ENCODE measurements at regions of chr11 and their contacts with region 1.

Region 1: GRCh38 chr11:59615637-59616395 is at the start of gene OSBP:
- DNase-seq: peak; percentile 86
- ATAC-seq: peak; percentile 80
- H3K4me3 Mint-ChIP-seq: peak within 1 kb of the TSS; percentile 96
- H3K27ac Mint-ChIP-seq: peak within 1 kb of the TSS; percentile 89
- H3K4me1 Mint-ChIP-seq: peaks cover 46% of the 10 kb centered on the region
- H3K27me3 Mint-ChIP-seq: no peaks in the 10 kb centered on the region
- CTCF ChIP-seq: no peak
- total RNA-seq, gene OSBP: 34.7 and 38.0 TPM in 2 replicates

Region 2: GRCh38 chr11:58549644-58550043 is 1066.2 kb before region 1 on chr11:
- CTCF ChIA-PET with region 1: no interaction called
- POLR2A ChIA-PET with region 1: no interaction called
- intact Hi-C with region 1: no loop called
- DNase-seq: no peak
- ATAC-seq: no peak
- H3K4me3 Mint-ChIP-seq: no peak overlapping the region
- H3K27ac Mint-ChIP-seq: no peak overlapping the region
- H3K4me1 Mint-ChIP-seq: no peaks in the 10 kb centered on the region
- H3K27me3 Mint-ChIP-seq: no peaks in the 10 kb centered on the region
- CTCF ChIP-seq: no peak

Region 3: GRCh38 chr11:59142530-59143507 is 473.0 kb before region 1 on chr11 and contains the start of gene FAM111A:
- CTCF ChIA-PET with region 1: no interaction called
- POLR2A ChIA-PET with region 1: interaction called, 5 read pairs
- intact Hi-C with region 1: loop called (anchors 2 kb)
- DNase-seq: peak; percentile 73
- ATAC-seq: peak; percentile 76
- H3K4me3 Mint-ChIP-seq: peak within 1 kb of the TSS; percentile 99
- H3K27ac Mint-ChIP-seq: peak within 1 kb of the TSS; percentile 99
- H3K4me1 Mint-ChIP-seq: peaks cover 71% of the 10 kb centered on the region
- H3K27me3 Mint-ChIP-seq: no peaks in the 10 kb centered on the region
- CTCF ChIP-seq: no peak
- total RNA-seq, gene FAM111A: 51.5 and 64.3 TPM in 2 replicates

Region 4: GRCh38 chr11:59542142-59542810 is 73.5 kb before region 1 on chr11:
- CTCF ChIA-PET with region 1: interaction called, 6 read pairs
- POLR2A ChIA-PET with region 1: no interaction called
- intact Hi-C with region 1: loop called (anchors 1 kb)
- DNase-seq: no peak
- ATAC-seq: no peak
- H3K4me3 Mint-ChIP-seq: no peak overlapping the region
- H3K27ac Mint-ChIP-seq: no peak overlapping the region
- H3K4me1 Mint-ChIP-seq: peaks cover 3% of the 10 kb centered on the region
- H3K27me3 Mint-ChIP-seq: no peaks in the 10 kb centered on the region
- CTCF ChIP-seq: no peak

Region 5: DNA sequence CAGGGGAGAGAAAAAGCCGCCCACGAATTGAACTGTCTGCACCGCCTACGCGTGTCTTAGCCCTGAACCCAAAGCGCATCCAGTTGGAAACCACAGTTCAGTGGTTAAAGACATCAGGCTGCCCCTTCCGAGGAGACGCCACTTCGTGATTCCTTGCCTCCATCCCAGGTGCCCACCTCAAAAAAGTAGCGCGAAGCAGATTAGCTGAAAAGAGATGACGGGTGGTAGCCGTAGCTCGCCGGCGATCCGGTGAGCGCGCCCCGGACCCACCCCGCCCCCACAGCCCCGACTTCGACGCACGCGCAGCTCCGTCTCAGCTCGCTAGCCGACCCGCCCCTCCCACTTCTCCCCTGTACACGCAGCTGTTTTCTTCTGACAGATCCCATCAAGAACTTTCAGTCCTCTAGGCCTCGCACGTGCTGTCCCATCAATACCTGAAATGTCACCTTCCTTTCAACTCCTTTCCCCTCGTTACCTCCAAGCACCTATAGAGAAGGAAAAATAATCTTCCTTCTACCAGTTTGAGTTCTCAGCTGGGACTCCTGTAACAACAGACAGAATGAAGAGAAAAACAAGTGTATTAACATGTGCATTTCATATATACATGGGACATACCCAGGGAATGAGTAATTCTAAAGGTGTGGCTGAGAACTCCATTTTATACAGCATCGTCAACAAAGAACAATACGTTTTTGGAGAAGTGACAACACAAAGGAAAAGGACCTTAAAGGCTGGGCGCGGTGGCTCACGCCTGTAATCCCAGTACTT is 54.9 kb before region 1 on chr11:
- CTCF ChIA-PET with region 1: no interaction called
- POLR2A ChIA-PET with region 1: interaction called, 21 read pairs
- intact Hi-C with region 1: loop called (anchors 1 kb)
- DNase-seq: peak; percentile 62
- ATAC-seq: peak; percentile 78
- H3K4me3 Mint-ChIP-seq: peak overlapping the region; percentile 92
- H3K27ac Mint-ChIP-seq: peak overlapping the region; percentile 91
- H3K4me1 Mint-ChIP-seq: peaks cover 43% of the 10 kb centered on the region
- H3K27me3 Mint-ChIP-seq: peaks cover 3% of the 10 kb centered on the region
- CTCF ChIP-seq: no peak

Region 6: GRCh38 chr11:59753650-59754493 is 138.1 kb after region 1 on chr11:
- CTCF ChIA-PET with region 1: no interaction called
- POLR2A ChIA-PET with region 1: interaction called, 5 read pairs
- intact Hi-C with region 1: loop called (anchors 2 kb)
- DNase-seq: peak; percentile 73
- ATAC-seq: peak; percentile 66
- H3K4me3 Mint-ChIP-seq: peak overlapping the region; percentile 90
- H3K27ac Mint-ChIP-seq: peak overlapping the region; percentile 62
- H3K4me1 Mint-ChIP-seq: peaks cover 28% of the 10 kb centered on the region
- H3K27me3 Mint-ChIP-seq: peaks cover 9% of the 10 kb centered on the region
- CTCF ChIP-seq: peak; percentile 79

Region 7: DNA sequence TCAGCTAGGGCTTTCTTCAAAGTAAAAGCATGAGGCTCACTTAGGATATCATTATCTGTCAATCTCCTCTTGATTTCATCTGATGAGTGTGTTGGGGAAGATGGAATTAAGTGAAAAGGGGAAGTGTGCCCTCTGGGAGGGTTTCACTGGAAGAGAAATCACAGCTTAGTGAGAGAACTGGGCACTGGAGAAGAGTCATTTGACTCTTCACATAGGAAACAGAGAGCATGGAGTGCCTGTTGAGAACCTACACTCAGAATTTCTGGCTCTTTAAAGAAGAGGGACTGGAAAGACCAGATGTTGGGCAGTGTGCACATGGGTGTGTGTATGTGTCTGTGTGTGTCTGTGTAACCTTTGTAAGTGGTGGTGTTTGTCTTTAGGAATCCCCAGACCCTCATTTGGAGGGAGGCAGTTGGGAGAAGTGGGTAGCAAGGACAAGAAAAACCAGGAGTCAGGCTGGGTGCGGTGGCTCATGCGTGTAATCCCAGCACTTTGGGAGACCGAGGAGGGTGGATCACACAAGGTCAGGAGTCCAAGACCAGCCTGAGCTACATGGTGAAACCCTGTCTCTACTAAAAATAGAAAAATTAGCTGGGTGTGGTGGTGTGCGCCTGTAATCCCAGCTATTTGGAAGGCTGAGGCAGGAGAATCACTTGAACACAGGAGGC is 149.4 kb after region 1 on chr11:
- CTCF ChIA-PET with region 1: no interaction called
- POLR2A ChIA-PET with region 1: no interaction called
- intact Hi-C with region 1: no loop called
- DNase-seq: no peak
- ATAC-seq: no peak
- H3K4me3 Mint-ChIP-seq: no peak overlapping the region
- H3K27ac Mint-ChIP-seq: no peak overlapping the region
- H3K4me1 Mint-ChIP-seq: peaks cover 11% of the 10 kb centered on the region
- H3K27me3 Mint-ChIP-seq: no peaks in the 10 kb centered on the region
- CTCF ChIP-seq: no peak

Region 8: GRCh38 chr11:60762851-60763691 is 1147.3 kb after region 1 on chr11:
- CTCF ChIA-PET with region 1: no interaction called
- POLR2A ChIA-PET with region 1: no interaction called
- intact Hi-C with region 1: loop called (anchors 5 kb)
- DNase-seq: no peak
- ATAC-seq: peak; percentile 90
- H3K4me3 Mint-ChIP-seq: peak overlapping the region; percentile 44
- H3K27ac Mint-ChIP-seq: peak overlapping the region; percentile 56
- H3K4me1 Mint-ChIP-seq: peaks cover 55% of the 10 kb centered on the region
- H3K27me3 Mint-ChIP-seq: peaks cover 18% of the 10 kb centered on the region
- CTCF ChIP-seq: no peak

Measured in activated B cell treated with CpG ODN at 0.5 μM for 24 hours (primary cell).